AG04449 (cell line): ENCODE measurements at regions of chr9 and their contacts with region 1.

Region 1: GRCh38 chr9:98775831-98776441 is 20.4 kb downstream of the ANKS6 start:
- DNase-seq: peak; percentile 24
- H3K4me3 ChIP-seq: no peak overlapping the region
- CTCF ChIP-seq: peak; percentile 78

Region 2: GRCh38 chr9:98207606-98208005 is 568.3 kb before region 1 on chr9:
- CTCF ChIA-PET with region 1: interaction called, 15 read pairs
- POLR2A ChIA-PET with region 1: no interaction called
- DNase-seq: no peak
- H3K4me3 ChIP-seq: no peak overlapping the region
- CTCF ChIP-seq: peak; percentile 12

Region 3: DNA sequence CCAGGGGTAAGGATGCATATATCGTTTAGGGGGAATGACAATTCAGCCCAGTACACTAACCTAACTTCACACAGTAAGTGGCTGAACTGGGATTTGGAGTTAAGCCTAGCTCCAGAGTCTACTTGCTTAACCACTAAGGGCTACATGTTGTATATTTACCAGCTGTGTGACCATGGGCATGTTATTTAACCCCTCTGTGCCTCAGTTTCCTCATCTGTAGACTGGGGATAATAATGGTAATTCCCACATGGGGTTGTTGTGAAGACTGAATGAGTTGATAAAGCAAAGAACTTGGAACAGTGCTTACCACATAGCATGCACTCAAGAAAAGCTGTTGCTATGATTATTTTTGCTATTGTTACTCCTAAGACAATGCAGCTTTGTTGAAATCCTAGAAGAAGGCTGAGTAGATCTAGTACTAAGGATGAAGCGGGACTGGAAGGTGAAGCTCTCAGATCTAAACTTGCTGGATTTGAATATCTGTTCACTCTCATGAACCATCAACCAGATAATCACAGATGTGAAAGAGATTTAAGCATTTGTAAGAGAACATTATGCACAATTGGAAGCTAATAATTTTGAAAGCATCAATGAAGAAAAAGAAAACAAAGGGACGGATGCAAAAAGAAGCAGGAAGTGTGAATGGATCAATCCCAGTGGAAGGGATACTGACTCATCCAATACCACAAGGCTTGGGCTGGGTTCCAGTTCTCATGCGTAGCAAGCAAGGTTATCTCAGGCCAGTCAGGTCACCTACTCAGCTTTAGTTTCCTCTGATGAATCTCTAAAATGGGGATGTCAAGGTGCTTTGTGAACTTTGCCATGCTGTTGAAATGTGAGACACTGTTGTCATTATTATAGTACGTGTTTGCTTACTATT is 442.0 kb before region 1 on chr9:
- CTCF ChIA-PET with region 1: interaction called, 10 read pairs
- POLR2A ChIA-PET with region 1: no interaction called
- DNase-seq: no peak
- H3K4me3 ChIP-seq: no peak overlapping the region
- CTCF ChIP-seq: no peak

Region 4: GRCh38 chr9:98488571-98489312 is 287.2 kb before region 1 on chr9:
- CTCF ChIA-PET with region 1: interaction called, 13 read pairs
- POLR2A ChIA-PET with region 1: no interaction called
- DNase-seq: peak; percentile 93
- H3K4me3 ChIP-seq: no peak overlapping the region
- CTCF ChIP-seq: no peak

Region 5: DNA sequence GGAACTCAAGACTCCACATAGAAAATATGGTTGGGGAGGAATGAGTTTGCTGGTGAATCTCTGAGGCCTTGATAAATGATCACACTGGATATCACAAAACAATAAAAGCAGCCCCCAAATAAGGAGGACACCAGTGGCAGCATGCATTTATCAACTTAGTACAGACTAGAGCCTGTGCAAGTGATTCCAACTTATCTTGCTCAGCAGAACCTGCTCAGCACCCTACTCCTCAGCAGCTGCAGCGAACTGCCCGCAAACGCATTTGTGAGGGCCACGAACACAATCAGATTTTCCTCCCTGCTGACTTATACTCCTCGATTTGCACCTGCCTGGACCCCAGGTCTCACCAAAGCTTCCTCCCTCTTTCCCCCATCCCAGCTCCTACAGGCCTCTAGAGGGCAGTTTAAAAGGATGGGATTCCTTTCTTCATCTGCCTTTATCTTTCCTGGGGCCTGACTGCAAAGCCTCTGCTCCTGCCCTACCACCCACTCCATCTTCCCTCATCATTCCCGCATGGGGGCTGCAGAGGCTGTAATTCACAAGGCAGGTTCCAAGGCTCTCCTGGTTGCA is 20.8 kb before region 1 on chr9:
- CTCF ChIA-PET with region 1: interaction called, 60 read pairs
- POLR2A ChIA-PET with region 1: no interaction called
- DNase-seq: no peak
- H3K4me3 ChIP-seq: no peak overlapping the region
- CTCF ChIP-seq: no peak

Region 6: DNA sequence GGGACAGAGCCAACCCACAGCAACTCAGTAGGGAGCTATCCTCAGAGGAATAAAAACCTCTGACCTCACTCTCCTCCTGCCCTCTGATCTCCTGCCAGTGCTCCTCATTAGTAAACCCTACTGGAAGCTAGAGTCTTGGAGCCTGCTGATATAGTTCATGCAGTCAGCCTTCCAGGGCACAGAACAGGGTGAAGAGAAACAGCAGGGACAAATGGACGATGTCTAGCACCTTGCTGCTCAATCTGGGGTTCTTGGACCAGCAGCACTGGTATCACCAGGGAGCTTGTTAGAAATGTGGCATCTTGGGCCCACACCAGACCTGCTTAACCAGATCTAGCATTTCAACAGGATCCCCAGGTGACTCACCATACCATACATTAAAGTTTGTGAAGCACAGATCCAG is 26.0 kb after region 1 on chr9:
- CTCF ChIA-PET with region 1: interaction called, 202 read pairs
- POLR2A ChIA-PET with region 1: no interaction called
- DNase-seq: no peak
- H3K4me3 ChIP-seq: no peak overlapping the region
- CTCF ChIP-seq: no peak